ENCODE measurements at regions of chr10 and their contacts with region 1.

Region 1: DNA sequence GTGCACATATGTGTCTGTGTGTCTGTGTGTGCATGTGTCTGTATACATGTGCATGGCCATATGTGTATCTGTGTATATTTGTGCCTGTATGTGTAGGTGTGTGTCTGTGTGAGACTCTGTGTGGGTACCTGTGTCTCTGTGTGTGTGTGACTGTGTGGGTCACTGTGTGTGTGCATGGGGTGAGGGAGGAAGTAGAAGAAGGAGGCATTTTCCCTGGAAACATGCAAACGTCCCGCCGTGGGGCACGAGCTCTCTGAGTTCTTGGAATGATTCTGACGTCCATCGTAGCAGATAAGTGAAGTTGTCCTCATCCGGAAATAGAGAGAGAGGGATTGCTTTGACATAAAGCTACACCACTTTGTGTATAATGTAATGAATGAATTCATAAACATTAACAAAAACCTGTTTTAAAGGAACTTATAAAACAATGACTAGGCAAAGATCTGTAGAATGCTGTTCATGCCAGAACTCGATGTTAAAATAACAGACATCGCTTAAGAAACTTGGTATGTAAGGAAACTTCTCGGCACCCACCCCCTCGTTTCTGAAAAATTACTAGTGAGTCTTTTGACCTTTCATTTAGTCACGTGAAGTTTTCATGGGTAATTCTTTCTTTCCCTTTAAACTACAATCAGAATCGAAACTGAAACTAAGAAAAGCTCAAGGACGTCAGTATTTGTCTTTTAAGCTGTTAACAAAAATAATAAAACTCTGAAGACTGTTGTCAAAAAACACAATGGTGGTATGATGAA is 43.6 kb upstream of the KLF6 start:
- DNase-seq: no peak
- H3K4me3 Mint-ChIP-seq: peak overlapping the region; percentile 42
- H3K27ac Mint-ChIP-seq: peak overlapping the region; percentile 88
- H3K4me1 Mint-ChIP-seq: peaks cover 47% of the 10 kb centered on the region
- H3K27me3 Mint-ChIP-seq: no peaks in the 10 kb centered on the region

Region 2: GRCh38 chr10:3785257-3785850 is 43.2 kb before region 1 on chr10:
- intact Hi-C with region 1: loop called (anchors 1 kb)
- DNase-seq: peak; percentile 99
- H3K4me3 Mint-ChIP-seq: peak overlapping the region; percentile 83
- H3K27ac Mint-ChIP-seq: peak overlapping the region; percentile 96
- H3K4me1 Mint-ChIP-seq: peaks cover 32% of the 10 kb centered on the region
- H3K27me3 Mint-ChIP-seq: no peaks in the 10 kb centered on the region

Region 3: GRCh38 chr10:3852147-3852904 is 23.7 kb after region 1 on chr10:
- intact Hi-C with region 1: loop called (anchors 1 kb)
- DNase-seq: peak; percentile 59
- H3K4me3 Mint-ChIP-seq: peak overlapping the region; percentile 9
- H3K27ac Mint-ChIP-seq: peak overlapping the region; percentile 79
- H3K4me1 Mint-ChIP-seq: peaks cover 42% of the 10 kb centered on the region
- H3K27me3 Mint-ChIP-seq: no peaks in the 10 kb centered on the region

Region 4: GRCh38 chr10:3867454-3868270 is 39.1 kb after region 1 on chr10:
- intact Hi-C with region 1: loop called (anchors 2 kb)
- DNase-seq: no peak
- H3K4me3 Mint-ChIP-seq: no peak overlapping the region
- H3K27ac Mint-ChIP-seq: peak overlapping the region; percentile 88
- H3K4me1 Mint-ChIP-seq: peaks cover 60% of the 10 kb centered on the region
- H3K27me3 Mint-ChIP-seq: no peaks in the 10 kb centered on the region

Measured in activated T-helper 2 cell treated with anti-CD3 and anti-CD28 coated beads, Interferon-gamma antibody, Interleukin-2, Interleukin-4, amounts not matched to agents 10 μg/mL and 5 μg/mL and 100 μg/mL, durations not matched to agents 14 hours and 24 hours and 36 hours (primary cell).